ENCODE measurements at regions of chr11 and their contacts with region 1.

Region 1: GRCh38 chr11:121655537-121656327 is 203.0 kb upstream of the SORL1-AS1 start:
- DNase-seq: peak; percentile 89
- H3K4me3 Mint-ChIP-seq: peak overlapping the region; percentile 78
- H3K27ac Mint-ChIP-seq: peak overlapping the region; percentile 67
- H3K4me1 Mint-ChIP-seq: peaks cover 17% of the 10 kb centered on the region
- H3K27me3 Mint-ChIP-seq: peaks cover 17% of the 10 kb centered on the region

Region 2: DNA sequence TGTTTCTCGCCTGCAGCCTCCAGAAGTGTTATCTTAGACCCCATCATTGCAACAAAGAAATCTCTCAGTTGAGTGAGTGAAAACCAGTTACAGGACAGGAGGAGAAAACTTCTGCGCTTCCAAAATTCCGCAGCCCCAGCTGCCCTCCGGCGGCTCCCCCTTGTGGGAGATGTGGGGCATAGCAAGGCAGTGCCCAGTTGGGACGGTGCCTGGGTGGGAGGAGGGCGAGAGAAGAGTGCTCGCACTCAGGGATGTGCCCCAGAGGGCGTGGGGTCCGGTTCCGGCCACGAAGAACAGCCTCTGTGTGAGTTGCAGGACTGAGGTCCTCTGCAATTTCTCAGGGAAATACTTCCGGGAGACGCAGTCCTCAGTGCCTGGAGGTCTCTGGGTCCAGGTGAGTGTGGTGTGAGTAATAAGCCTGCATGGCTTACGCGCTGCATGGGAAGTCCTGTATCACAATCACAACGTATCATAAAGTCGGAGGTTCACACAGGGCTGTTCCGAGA is 547.3 kb after region 1 on chr11:
- intact Hi-C with region 1: loop called (anchors 1 kb)
- DNase-seq: peak; percentile 80
- H3K4me3 Mint-ChIP-seq: no peak overlapping the region
- H3K27ac Mint-ChIP-seq: no peak overlapping the region
- H3K4me1 Mint-ChIP-seq: peaks cover 3% of the 10 kb centered on the region
- H3K27me3 Mint-ChIP-seq: peaks cover 16% of the 10 kb centered on the region

Region 3: GRCh38 chr11:122235615-122236014 is 579.9 kb after region 1 on chr11:
- intact Hi-C with region 1: no loop called
- DNase-seq: no peak
- H3K4me3 Mint-ChIP-seq: no peak overlapping the region
- H3K27ac Mint-ChIP-seq: no peak overlapping the region
- H3K4me1 Mint-ChIP-seq: no peaks in the 10 kb centered on the region
- H3K27me3 Mint-ChIP-seq: no peaks in the 10 kb centered on the region

Region 4: GRCh38 chr11:122505304-122506006 is 849.7 kb after region 1 on chr11:
- intact Hi-C with region 1: loop called (anchors 1 kb)
- DNase-seq: peak; percentile 83
- H3K4me3 Mint-ChIP-seq: no peak overlapping the region
- H3K27ac Mint-ChIP-seq: no peak overlapping the region
- H3K4me1 Mint-ChIP-seq: peaks cover 2% of the 10 kb centered on the region
- H3K27me3 Mint-ChIP-seq: peaks cover 16% of the 10 kb centered on the region

Measured in activated CD4-positive, alpha-beta T cell treated with anti-CD3 and anti-CD28 coated beads, Interleukin-2, amount 10 ng/mL, durations not matched to agents 24 days and 14 days (primary cell).